H1 (cell line): ENCODE measurements at regions of chr5 and their contacts with region 1.

Region 1: GRCh38 chr5:73152411-73153388 is 20.3 kb upstream of the TMEM174 start:
- DNase-seq: no peak
- H3K4me3 ChIP-seq: no peak overlapping the region
- H3K27ac ChIP-seq: no peak overlapping the region
- H3K4me1 ChIP-seq: peaks cover 0 to 2% (median under 1%) of the 10 kb centered on the region in 4 experiments; a peak in 1 of 7 replicates
- H3K27me3 ChIP-seq: no peaks in the 10 kb centered on the region
- CTCF ChIP-seq: peak in 2 of 3 experiments; percentile 42; a peak in 3 of 4 replicates
- EP300 ChIP-seq: no peak
- POLR2A ChIP-seq: no peak
- RAD21 ChIP-seq: peak; percentile 44 to 56

Region 2: DNA sequence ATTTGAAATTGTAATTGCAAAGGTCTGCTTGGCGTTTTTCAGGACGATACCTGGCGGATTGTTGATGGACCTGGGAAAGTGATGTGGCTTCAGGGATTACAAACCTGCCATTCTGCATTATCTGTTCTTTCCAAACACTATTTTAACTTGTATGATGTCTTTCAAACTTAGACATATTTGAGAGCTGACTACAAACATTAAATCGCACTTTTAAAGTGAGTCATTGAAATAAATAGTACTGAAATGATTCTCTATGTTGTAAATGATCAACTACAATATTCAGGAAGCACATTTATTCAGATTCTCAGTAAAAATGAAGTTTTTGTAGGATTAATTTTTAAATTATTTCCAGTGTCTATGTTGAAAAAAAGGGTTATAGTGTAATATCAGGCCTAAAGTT is 64.7 kb before region 1 on chr5:
- CTCF ChIA-PET with region 1: interaction called, 15 read pairs
- POLR2A ChIA-PET with region 1: no interaction called
- DNase-seq: no peak
- H3K4me3 ChIP-seq: no peak overlapping the region
- H3K27ac ChIP-seq: no peak overlapping the region
- H3K4me1 ChIP-seq: no peaks in the 10 kb centered on the region
- H3K27me3 ChIP-seq: no peaks in the 10 kb centered on the region
- CTCF ChIP-seq: no peak
- EP300 ChIP-seq: no peak
- POLR2A ChIP-seq: no peak
- RAD21 ChIP-seq: no peak

Region 3: GRCh38 chr5:73135429-73136054 is 17.2 kb before region 1 on chr5:
- CTCF ChIA-PET with region 1: interaction called, 33 read pairs
- POLR2A ChIA-PET with region 1: interaction called, 3 read pairs
- DNase-seq: no peak
- H3K4me3 ChIP-seq: no peak overlapping the region
- H3K27ac ChIP-seq: no peak overlapping the region
- H3K4me1 ChIP-seq: peaks cover 0 to 10% (median 3%) of the 10 kb centered on the region in 4 experiments; a peak in 3 of 7 replicates
- H3K27me3 ChIP-seq: no peaks in the 10 kb centered on the region; a peak in 1 of 7 replicates
- CTCF ChIP-seq: peak in 2 of 3 experiments; percentile 38 to 42; a peak in 2 of 4 replicates
- EP300 ChIP-seq: no peak
- POLR2A ChIP-seq: no peak
- RAD21 ChIP-seq: peak; percentile 41 to 49

Region 4: DNA sequence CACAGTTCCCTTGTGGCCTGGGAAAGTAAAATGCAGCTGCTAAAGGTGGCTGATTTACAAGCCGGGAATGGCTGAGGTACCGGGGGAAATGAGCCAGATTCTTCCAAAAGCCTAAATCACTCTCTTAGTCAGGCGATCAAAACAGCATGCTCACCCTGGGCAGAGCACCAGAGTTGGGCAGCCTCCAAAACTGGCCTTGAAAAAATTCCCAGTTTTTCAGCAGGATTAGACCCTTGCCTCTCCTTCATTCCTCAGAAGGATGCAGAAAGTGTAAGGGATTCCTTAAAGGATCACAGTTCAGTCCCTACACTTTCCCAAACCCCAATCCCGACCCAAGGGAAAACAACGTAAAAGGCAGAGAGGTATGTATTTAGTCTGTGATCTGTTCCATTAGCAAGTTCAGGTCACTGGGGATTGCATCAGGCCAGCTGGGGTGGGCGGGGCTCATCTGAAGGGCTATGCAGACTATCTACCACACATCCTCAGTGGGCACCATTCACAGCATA is 37.2 kb after region 1 on chr5:
- CTCF ChIA-PET with region 1: interaction called, 12 read pairs
- POLR2A ChIA-PET with region 1: no interaction called
- DNase-seq: no peak
- H3K4me3 ChIP-seq: no peak overlapping the region
- H3K27ac ChIP-seq: no peak overlapping the region
- H3K4me1 ChIP-seq: peaks cover 2 to 8% (median 3%) of the 10 kb centered on the region in 4 experiments; a peak in 5 of 7 replicates
- H3K27me3 ChIP-seq: no peaks in the 10 kb centered on the region
- CTCF ChIP-seq: no peak
- EP300 ChIP-seq: no peak
- POLR2A ChIP-seq: no peak
- RAD21 ChIP-seq: no peak

Region 5: DNA sequence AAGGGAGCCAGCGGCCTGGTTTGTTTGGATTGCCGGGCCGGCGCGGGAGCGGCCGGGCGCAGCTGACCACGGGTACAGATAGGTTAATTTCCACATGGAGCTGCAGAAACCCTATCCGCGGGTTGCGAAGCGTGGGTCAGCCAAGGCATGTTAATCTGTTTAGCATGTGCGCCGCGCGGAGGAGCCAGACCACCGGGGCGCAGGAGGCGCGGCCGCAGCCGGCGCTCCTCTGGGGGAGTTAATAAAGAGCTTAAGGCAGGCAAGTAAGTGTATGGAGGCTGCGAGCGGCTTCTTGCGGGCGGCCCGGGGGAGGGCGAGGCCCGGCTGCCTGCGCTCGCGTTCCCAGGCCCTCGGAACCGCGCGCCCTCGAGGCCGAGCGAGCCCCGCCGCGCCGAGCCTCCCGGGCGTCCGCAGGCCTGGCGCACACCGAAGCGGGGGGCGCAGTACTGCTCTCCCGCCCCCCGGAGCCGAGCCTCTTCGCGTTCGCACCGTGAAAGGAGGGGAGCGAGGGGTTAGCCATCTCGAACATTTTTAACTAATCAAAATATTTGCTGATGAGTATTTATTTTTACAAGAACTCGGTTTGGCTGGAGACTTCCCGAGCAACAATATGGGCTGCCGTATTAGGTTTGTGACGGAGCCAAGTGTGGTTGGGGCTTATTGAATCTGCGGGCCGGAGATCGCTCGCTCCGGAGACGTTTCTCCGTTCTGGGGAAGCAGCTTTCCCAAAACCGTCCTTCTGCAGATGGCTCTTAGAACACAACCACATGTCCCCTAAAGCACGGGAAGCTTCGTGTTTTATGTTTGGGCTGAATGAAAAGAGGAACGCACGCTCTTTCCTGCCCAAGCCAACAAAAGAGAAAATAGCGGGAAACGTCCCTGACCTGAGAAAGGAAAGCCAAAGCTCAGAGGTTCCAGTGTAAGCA is 267.0 kb after region 1 on chr5:
- CTCF ChIA-PET with region 1: no interaction called
- POLR2A ChIA-PET with region 1: no interaction called
- DNase-seq: peak in 1 of 2 experiments; percentile 76
- H3K4me3 ChIP-seq: peak overlapping the region; percentile 49 to 64 (median 53)
- H3K27ac ChIP-seq: no peak overlapping the region
- H3K4me1 ChIP-seq: peaks cover 0 to 11% (median 0%) of the 10 kb centered on the region in 4 experiments; a peak in 4 of 7 replicates
- H3K27me3 ChIP-seq: peaks cover 46 to 69% (median 60%) of the 10 kb centered on the region in 4 experiments
- CTCF ChIP-seq: no peak; a peak in 1 of 4 replicates
- EP300 ChIP-seq: no peak
- POLR2A ChIP-seq: no peak
- RAD21 ChIP-seq: no peak; a peak in 1 of 4 replicates